Mammary epithelial cell (primary cell): ENCODE measurements at regions of chr13 and their contacts with region 1.

Region 1: GRCh38 chr13:53068585-53069520 is 40.2 kb downstream of the OLFM4 start:
- DNase-seq: no peak
- H3K4me3 ChIP-seq: no peak overlapping the region
- H3K27ac ChIP-seq: no peak overlapping the region
- H3K4me1 ChIP-seq: no peaks in the 10 kb centered on the region
- H3K27me3 ChIP-seq: no peaks in the 10 kb centered on the region
- CTCF ChIP-seq: no peak

Region 2: GRCh38 chr13:52896827-52897659 is 171.8 kb before region 1 on chr13:
- CTCF ChIA-PET with region 1: interaction called, 18 read pairs
- dilution Hi-C with region 1: no loop called
- in situ Hi-C with region 1: no loop called
- intact Hi-C with region 1: no loop called
- DNase-seq: no peak
- H3K4me3 ChIP-seq: no peak overlapping the region
- H3K27ac ChIP-seq: no peak overlapping the region
- H3K4me1 ChIP-seq: no peaks in the 10 kb centered on the region
- H3K27me3 ChIP-seq: no peaks in the 10 kb centered on the region
- CTCF ChIP-seq: peak; percentile 64 to 71